T-cell (primary cell): ENCODE measurements at regions of chr11 and their contacts with region 1.

Region 1: GRCh38 chr11:102614485-102614884 is 10.6 kb downstream of the MMP20 start:
- DNase-seq: no peak
- ATAC-seq: no peak
- H3K4me3 ChIP-seq: no peak overlapping the region
- H3K4me3 Mint-ChIP-seq: no peak overlapping the region
- H3K27ac ChIP-seq: no peak overlapping the region
- H3K27ac Mint-ChIP-seq: no peak overlapping the region
- H3K4me1 ChIP-seq: peaks cover 0 to 2% of the 10 kb centered on the region in 2 experiments
- H3K4me1 Mint-ChIP-seq: peaks cover 0 to 6% (median 3%) of the 10 kb centered on the region in 3 donors
- H3K27me3 ChIP-seq: peaks cover 0 to 3% of the 10 kb centered on the region in 2 experiments
- H3K27me3 Mint-ChIP-seq: peaks cover 0 to 4% of the 10 kb centered on the region in 2 donors

Region 2: DNA sequence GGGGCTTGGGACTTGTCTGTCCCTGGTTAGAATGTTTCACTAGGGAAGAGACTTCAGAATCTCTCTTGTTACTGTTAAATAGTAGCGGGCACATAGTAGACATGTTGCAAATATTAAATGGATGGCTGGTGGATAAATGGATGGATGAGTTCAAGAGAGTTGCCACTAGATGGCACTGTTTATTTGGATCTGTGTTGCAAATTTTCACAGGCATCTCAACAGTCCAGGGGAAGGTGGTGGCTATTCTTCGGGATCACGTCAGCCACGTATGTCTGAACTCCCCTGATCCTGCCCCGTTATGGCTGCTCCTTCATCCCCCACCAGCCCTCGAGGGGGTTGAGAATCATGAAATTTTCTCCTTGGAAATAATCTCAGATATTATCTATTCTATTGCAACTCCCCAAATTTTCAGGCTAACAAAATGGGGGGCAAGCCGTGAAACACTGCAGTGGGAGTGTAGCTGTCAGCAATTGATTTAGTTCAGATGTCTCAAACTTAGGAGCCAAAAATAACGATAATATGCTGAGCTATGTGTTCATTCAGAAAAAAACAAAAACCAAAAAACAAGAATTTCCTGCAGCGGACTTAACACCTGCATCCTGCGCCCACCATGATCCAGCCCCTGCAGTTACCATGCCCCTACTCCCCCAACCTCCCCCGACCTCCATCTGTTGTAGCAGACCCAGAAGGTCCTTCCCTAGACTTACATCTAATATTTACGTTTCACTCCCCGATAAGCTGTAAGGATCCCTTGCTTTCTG is 326.3 kb before region 1 on chr11:
- CTCF ChIA-PET with region 1: interaction called, 8 to 10 read pairs
- POLR2A ChIA-PET with region 1: no interaction called
- DNase-seq: peak in 11 of 35 experiments; percentile 10 to 85 (median 23)
- ATAC-seq: peak; percentile 76 to 87 (median 81)
- H3K4me3 ChIP-seq: peak overlapping the region in 1 of 2 donors; percentile 39
- H3K4me3 Mint-ChIP-seq: peak overlapping the region in 1 of 3 donors; percentile 55
- H3K27ac ChIP-seq: no peak overlapping the region
- H3K27ac Mint-ChIP-seq: no peak overlapping the region
- H3K4me1 ChIP-seq: peaks cover 2 to 9% of the 10 kb centered on the region in 2 experiments
- H3K4me1 Mint-ChIP-seq: peaks cover 12 to 34% (median 18%) of the 10 kb centered on the region in 3 donors
- H3K27me3 ChIP-seq: no peaks in the 10 kb centered on the region
- H3K27me3 Mint-ChIP-seq: no peaks in the 10 kb centered on the region

Region 3: GRCh38 chr11:102598272-102598671 is 16.2 kb before region 1 on chr11:
- CTCF ChIA-PET with region 1: interaction called in 1 of 2 experiments, 10 read pairs
- POLR2A ChIA-PET with region 1: interaction called in 1 of 2 experiments, 9 read pairs
- DNase-seq: no peak
- ATAC-seq: no peak
- H3K4me3 ChIP-seq: no peak overlapping the region
- H3K4me3 Mint-ChIP-seq: no peak overlapping the region
- H3K27ac ChIP-seq: no peak overlapping the region
- H3K27ac Mint-ChIP-seq: no peak overlapping the region
- H3K4me1 ChIP-seq: no peaks in the 10 kb centered on the region
- H3K4me1 Mint-ChIP-seq: peaks cover 0 to 6% (median 5%) of the 10 kb centered on the region in 3 donors
- H3K27me3 ChIP-seq: no peaks in the 10 kb centered on the region
- H3K27me3 Mint-ChIP-seq: no peaks in the 10 kb centered on the region